Activated naive CD4-positive, alpha-beta T cell treated with anti-CD3 and anti-CD28 coated beads for 36 hours (primary cell): ENCODE measurements at regions of chr16 and their contacts with region 1.

Region 1: GRCh38 chr16:30902029-30902972 is 5.9 kb downstream of the CTF1 start:
- DNase-seq: peak; percentile 54
- H3K4me3 Mint-ChIP-seq: peak overlapping the region; percentile 98
- H3K27ac Mint-ChIP-seq: peak overlapping the region; percentile 98
- H3K4me1 Mint-ChIP-seq: peaks cover 29% of the 10 kb centered on the region
- H3K27me3 Mint-ChIP-seq: no peaks in the 10 kb centered on the region

Region 2: GRCh38 chr16:30767767-30768415 is 134.4 kb before region 1 on chr16:
- CTCF ChIA-PET with region 1: no interaction called
- intact Hi-C with region 1: no loop called
- DNase-seq: no peak
- H3K4me3 Mint-ChIP-seq: no peak overlapping the region
- H3K27ac Mint-ChIP-seq: no peak overlapping the region
- H3K4me1 Mint-ChIP-seq: peaks cover 13% of the 10 kb centered on the region
- H3K27me3 Mint-ChIP-seq: no peaks in the 10 kb centered on the region

Region 3: DNA sequence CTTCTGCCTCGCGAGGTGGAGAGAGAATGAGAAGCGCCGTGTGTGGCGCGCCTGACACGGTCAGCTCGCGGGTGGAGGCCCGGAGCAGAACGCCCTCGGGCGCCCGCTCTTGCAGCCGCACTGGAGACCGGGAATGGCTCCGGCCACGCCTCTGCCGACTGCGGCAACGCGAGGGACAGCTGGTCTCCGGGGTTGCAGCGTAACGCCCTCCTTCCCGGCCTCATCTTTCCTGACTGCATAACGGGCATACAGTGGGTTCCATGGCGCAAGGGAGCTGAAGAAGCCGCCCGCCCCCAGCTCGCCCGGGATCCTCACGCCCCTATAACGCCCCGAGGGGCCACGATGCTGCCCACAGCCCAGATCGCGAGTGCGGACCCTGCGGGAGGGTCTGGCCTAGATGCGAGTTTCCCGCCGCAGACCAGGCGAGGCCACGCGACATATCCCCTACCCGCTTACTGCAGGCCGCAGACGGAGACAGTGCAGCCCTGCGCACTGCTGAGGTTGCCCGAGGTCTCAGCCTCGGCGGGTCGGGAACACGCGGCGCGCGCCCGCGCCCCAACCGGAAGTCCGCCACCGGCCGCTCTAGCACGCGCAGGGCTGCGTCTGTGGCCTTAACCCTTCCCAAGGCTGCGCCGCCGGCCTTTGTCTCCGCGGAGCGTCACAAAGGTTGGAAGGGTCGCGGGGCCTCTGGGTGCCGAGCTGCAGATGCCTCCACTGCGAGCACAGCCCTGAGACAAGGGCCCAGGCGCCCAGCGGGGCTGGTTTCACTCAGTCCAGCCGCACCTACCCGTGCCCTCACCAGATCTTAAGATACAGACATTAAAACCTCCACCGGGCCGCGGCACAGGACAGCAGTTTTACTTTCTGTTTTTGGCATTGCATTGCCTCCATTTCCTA is 27.2 kb before region 1 on chr16:
- CTCF ChIA-PET with region 1: interaction called, 13 read pairs
- intact Hi-C with region 1: loop called (anchors 2 kb)
- DNase-seq: peak; percentile 90
- H3K4me3 Mint-ChIP-seq: peak overlapping the region; percentile 92
- H3K27ac Mint-ChIP-seq: peak overlapping the region; percentile 96
- H3K4me1 Mint-ChIP-seq: peaks cover 40% of the 10 kb centered on the region
- H3K27me3 Mint-ChIP-seq: no peaks in the 10 kb centered on the region

Region 4: DNA sequence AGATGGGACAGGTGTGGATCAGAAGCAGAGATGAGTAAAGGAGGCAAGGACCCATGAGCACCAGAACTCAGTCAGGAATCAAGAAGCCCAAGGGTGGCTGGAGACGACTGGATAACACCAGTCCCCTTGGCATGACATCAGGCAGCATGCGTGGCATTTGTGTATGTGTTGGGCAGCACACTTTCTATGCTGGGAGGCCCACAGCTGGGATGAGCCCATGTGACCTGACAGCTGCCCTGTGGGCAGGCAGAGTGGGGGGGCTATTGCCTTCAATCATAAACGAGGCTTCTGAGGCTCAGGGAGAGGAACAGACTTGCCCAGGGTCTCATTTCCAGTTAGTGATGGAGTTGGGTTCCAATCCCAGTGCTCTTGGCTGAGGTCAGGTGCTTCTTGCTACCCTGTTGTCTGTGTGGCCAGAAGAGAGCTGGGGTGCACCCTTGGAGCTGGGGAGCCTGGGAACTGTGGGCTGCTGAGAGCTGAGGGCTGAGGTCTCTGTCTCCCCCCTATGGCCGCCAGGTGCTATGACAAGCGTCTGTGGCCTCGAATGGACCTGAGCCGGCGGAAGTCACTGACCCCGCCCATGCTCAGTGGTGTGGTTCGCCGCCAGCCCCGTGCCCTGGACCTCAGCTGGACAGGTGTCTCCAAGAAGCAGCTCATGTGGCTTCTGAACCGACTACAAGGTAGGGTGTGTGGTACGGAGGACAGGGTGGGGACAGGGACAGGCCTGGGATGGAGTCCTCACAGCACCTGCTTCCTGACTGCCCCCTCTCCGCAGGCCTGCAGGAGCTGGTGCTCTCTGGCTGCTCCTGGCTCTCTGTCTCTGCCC is 39.5 kb after region 1 on chr16:
- CTCF ChIA-PET with region 1: interaction called, 13 read pairs
- intact Hi-C with region 1: no loop called
- DNase-seq: peak; percentile 79
- H3K4me3 Mint-ChIP-seq: no peak overlapping the region
- H3K27ac Mint-ChIP-seq: peak overlapping the region; percentile 51
- H3K4me1 Mint-ChIP-seq: peaks cover 21% of the 10 kb centered on the region
- H3K27me3 Mint-ChIP-seq: no peaks in the 10 kb centered on the region

Region 5: GRCh38 chr16:31273676-31274075 is 371.4 kb after region 1 on chr16:
- CTCF ChIA-PET with region 1: no interaction called
- intact Hi-C with region 1: no loop called
- DNase-seq: no peak
- H3K4me3 Mint-ChIP-seq: no peak overlapping the region
- H3K27ac Mint-ChIP-seq: peak overlapping the region; percentile 54
- H3K4me1 Mint-ChIP-seq: peaks cover under 1% of the 10 kb centered on the region
- H3K27me3 Mint-ChIP-seq: peaks cover 4% of the 10 kb centered on the region